MCF 10A (cell line): ENCODE measurements at regions of chr16 and their contacts with region 1.

Region 1: GRCh38 chr16:73172241-73172972 is 124.5 kb upstream of the ZFHX3 start:
- DNase-seq: peak; percentile 87
- H3K4me3 Mint-ChIP-seq: no peak overlapping the region
- H3K27ac Mint-ChIP-seq: no peak overlapping the region
- H3K4me1 Mint-ChIP-seq: peaks cover 37% of the 10 kb centered on the region
- H3K27me3 Mint-ChIP-seq: no peaks in the 10 kb centered on the region
- CTCF ChIP-seq: peak; percentile 42

Region 2: GRCh38 chr16:72989579-72990551 is 182.5 kb before region 1 on chr16:
- CTCF ChIA-PET with region 1: interaction called, 3 read pairs
- POLR2A ChIA-PET with region 1: interaction called, 3 read pairs
- intact Hi-C with region 1: loop called (anchors 10 kb)
- DNase-seq: peak; percentile 94
- H3K4me3 Mint-ChIP-seq: peak overlapping the region; percentile 73
- H3K27ac Mint-ChIP-seq: peak overlapping the region; percentile 95
- H3K4me1 Mint-ChIP-seq: peaks cover 73% of the 10 kb centered on the region
- H3K27me3 Mint-ChIP-seq: no peaks in the 10 kb centered on the region
- CTCF ChIP-seq: no peak

Region 3: DNA sequence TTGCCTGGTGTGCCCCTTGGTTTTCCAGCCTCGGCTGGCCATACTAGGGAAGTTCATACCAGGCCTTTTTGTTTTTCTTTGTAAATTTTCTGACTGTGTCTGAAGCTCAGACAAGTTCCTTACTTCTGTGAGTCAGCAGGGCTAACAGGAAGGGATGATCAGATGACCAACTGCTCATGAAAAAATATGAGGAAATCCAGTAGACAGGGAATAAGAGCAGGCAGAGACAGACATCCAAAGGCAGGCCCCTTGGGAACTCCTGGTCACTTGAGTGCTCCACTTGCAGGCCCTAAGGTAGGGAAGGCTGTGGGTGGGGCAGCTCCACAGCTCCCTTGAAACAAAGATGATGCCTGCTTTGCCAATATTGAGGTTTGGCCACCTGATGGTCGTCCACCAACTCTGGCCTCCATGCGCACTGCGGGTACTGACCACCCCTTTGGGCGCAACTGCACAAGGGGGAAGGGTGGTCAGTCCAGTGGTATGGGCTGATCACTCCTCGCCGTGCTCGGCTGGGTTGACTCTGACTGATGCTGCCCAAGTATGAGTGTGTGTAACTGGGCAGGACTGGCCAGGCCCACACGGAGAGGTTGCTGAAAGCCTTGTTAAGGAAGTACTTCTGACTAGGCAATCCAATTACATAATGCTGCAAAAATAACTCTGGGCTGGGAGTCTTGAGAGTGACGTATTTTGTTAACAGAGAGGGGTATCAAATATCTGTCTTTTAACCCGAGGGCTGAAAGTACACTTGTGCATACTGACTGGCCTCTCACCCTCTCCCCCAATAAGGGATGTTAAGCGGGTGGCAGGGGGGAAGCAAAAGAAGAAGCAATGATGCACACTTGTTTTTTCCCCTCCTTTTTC is 103.6 kb before region 1 on chr16:
- CTCF ChIA-PET with region 1: no interaction called
- POLR2A ChIA-PET with region 1: interaction called, 4 read pairs
- intact Hi-C with region 1: loop called (anchors 1 kb)
- DNase-seq: peak; percentile 86
- H3K4me3 Mint-ChIP-seq: no peak overlapping the region
- H3K27ac Mint-ChIP-seq: peak overlapping the region; percentile 96
- H3K4me1 Mint-ChIP-seq: peaks cover 36% of the 10 kb centered on the region
- H3K27me3 Mint-ChIP-seq: no peaks in the 10 kb centered on the region
- CTCF ChIP-seq: no peak

Region 4: DNA sequence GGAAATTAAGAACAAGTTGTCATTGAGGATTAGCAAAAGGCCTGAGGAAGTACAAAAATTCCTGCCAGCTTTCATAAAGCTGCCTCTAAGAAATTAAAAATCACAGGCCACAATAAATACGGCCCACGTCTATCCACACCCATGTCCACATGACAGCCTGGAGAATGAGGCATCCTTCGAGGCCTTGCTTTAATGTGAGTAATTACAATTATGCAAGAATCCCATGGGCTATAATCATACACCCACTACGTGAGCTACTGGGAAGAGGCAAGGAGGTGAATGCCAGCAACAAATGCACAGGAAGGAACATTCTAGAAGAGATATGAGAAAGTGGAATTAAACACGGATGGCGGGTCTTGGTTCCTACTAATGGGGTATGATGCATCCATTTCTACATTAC is 59.1 kb before region 1 on chr16:
- CTCF ChIA-PET with region 1: no interaction called
- POLR2A ChIA-PET with region 1: interaction called, 6 read pairs
- intact Hi-C with region 1: loop called (anchors 2 kb)
- DNase-seq: peak; percentile 87
- H3K4me3 Mint-ChIP-seq: no peak overlapping the region
- H3K27ac Mint-ChIP-seq: peak overlapping the region; percentile 100
- H3K4me1 Mint-ChIP-seq: peaks cover 17% of the 10 kb centered on the region
- H3K27me3 Mint-ChIP-seq: no peaks in the 10 kb centered on the region
- CTCF ChIP-seq: no peak

Region 5: DNA sequence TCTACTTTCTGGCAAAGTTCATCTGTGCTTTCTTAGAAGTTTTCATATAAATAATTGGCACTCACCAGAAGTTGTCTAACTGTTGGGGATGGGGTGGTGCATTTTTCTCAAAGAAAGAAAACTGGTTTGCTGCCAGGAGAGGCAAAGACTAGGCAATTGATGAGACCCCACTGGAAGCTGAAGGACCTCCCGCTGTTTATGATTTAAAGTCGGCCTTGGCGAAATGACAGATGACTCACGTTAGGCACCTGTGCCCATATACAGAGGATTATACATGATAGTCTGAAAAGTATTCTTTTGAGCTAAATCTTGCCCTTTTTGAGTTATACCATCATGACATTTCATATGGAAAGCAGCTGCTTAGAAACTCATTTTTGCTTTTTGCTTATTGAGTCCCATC is 68.5 kb after region 1 on chr16:
- CTCF ChIA-PET with region 1: no interaction called
- POLR2A ChIA-PET with region 1: no interaction called
- intact Hi-C with region 1: no loop called
- DNase-seq: no peak
- H3K4me3 Mint-ChIP-seq: no peak overlapping the region
- H3K27ac Mint-ChIP-seq: no peak overlapping the region
- H3K4me1 Mint-ChIP-seq: no peaks in the 10 kb centered on the region
- H3K27me3 Mint-ChIP-seq: peaks cover 58% of the 10 kb centered on the region
- CTCF ChIP-seq: no peak